ENCODE measurements at regions of chr11 and their contacts with region 1.

Region 1: GRCh38 chr11:128552783-128553661 is 34.3 kb downstream of the ETS1 start:
- DNase-seq: peak; percentile 47
- ATAC-seq: peak; percentile 78
- H3K4me3 Mint-ChIP-seq: peak overlapping the region; percentile 73
- H3K27ac Mint-ChIP-seq: peak overlapping the region; percentile 98
- H3K4me1 Mint-ChIP-seq: peaks cover 72% of the 10 kb centered on the region
- H3K27me3 Mint-ChIP-seq: no peaks in the 10 kb centered on the region
- CTCF ChIP-seq: no peak

Region 2: GRCh38 chr11:128323381-128323780 is 229.6 kb before region 1 on chr11:
- CTCF ChIA-PET with region 1: interaction called, 7 read pairs
- POLR2A ChIA-PET with region 1: interaction called, 4 read pairs
- intact Hi-C with region 1: loop called (anchors 1 kb)
- DNase-seq: no peak
- ATAC-seq: peak; percentile 25
- H3K4me3 Mint-ChIP-seq: no peak overlapping the region
- H3K27ac Mint-ChIP-seq: peak overlapping the region; percentile 59
- H3K4me1 Mint-ChIP-seq: peaks cover 49% of the 10 kb centered on the region
- H3K27me3 Mint-ChIP-seq: no peaks in the 10 kb centered on the region
- CTCF ChIP-seq: no peak

Region 3: GRCh38 chr11:128453444-128454336 is 99.3 kb before region 1 on chr11:
- CTCF ChIA-PET with region 1: no interaction called
- POLR2A ChIA-PET with region 1: no interaction called
- intact Hi-C with region 1: no loop called
- DNase-seq: no peak
- ATAC-seq: no peak
- H3K4me3 Mint-ChIP-seq: no peak overlapping the region
- H3K27ac Mint-ChIP-seq: peak overlapping the region; percentile 54
- H3K4me1 Mint-ChIP-seq: peaks cover 53% of the 10 kb centered on the region
- H3K27me3 Mint-ChIP-seq: no peaks in the 10 kb centered on the region
- CTCF ChIP-seq: no peak

Region 4: DNA sequence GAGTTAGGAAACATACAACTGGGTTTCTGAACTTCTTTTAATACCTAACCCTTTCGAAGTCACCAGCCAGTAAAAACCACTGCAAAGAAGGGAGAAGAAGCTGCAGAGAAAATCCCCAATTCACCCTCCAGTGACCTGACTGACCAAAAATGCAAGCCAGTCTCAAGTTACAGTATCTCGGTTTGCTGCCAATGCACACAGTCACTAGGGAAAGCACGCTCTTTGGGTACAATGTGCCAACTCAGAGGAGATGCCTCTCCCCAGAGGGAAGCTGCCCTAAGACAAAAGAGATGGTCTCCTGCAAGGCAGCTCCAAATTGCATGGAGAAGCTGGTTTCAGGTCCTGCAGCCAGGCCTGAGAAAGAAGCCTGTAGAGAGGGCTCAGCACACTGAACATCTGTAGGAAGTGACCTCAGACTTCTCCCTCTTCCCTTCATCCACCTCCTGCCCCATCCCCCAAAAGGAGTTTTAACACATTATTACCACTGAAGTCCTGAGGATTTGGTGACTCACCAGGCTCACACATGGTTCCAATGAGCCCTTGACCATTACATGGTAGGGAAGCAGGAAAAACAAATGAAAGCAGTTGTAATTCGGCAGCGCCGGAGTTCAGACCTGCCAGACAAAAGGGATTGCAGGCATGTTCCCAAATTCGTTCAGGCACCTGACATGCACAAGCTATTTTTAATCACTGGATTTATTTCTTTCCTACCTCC is 55.8 kb before region 1 on chr11:
- CTCF ChIA-PET with region 1: no interaction called
- POLR2A ChIA-PET with region 1: interaction called, 5 read pairs
- intact Hi-C with region 1: loop called (anchors 1 kb)
- DNase-seq: peak; percentile 43
- ATAC-seq: peak; percentile 92
- H3K4me3 Mint-ChIP-seq: peak overlapping the region; percentile 78
- H3K27ac Mint-ChIP-seq: peak overlapping the region; percentile 93
- H3K4me1 Mint-ChIP-seq: peaks cover 98% of the 10 kb centered on the region
- H3K27me3 Mint-ChIP-seq: no peaks in the 10 kb centered on the region
- CTCF ChIP-seq: no peak

Region 5: GRCh38 chr11:128565881-128566280 is 12.9 kb after region 1 on chr11:
- CTCF ChIA-PET with region 1: interaction called, 10 read pairs
- POLR2A ChIA-PET with region 1: interaction called, 86 read pairs
- intact Hi-C with region 1: loop called (anchors 1 kb)
- DNase-seq: no peak
- ATAC-seq: no peak
- H3K4me3 Mint-ChIP-seq: no peak overlapping the region
- H3K27ac Mint-ChIP-seq: peak overlapping the region; percentile 68
- H3K4me1 Mint-ChIP-seq: peaks cover 76% of the 10 kb centered on the region
- H3K27me3 Mint-ChIP-seq: no peaks in the 10 kb centered on the region
- CTCF ChIP-seq: no peak

Region 6: DNA sequence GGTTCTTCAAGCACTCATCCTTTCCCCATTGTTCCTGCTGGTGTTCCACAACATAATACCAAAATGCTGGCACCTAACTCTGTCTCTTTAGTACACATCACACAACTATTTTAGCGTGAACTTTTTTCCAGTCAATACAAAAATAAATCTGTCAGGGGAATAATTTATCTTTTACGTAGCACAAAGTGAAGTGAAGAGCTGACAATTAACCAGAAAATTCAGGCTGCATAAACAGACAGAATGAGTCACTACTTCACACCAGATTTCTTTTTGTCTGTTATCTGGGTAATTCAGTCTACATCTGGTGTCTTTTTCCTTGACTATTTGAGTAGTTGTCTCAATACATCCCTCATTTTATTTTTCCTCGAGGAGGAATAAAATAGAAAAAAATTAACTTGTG is 42.2 kb after region 1 on chr11:
- CTCF ChIA-PET with region 1: interaction called, 3 read pairs
- POLR2A ChIA-PET with region 1: interaction called, 11 read pairs
- intact Hi-C with region 1: no loop called
- DNase-seq: no peak
- ATAC-seq: no peak
- H3K4me3 Mint-ChIP-seq: no peak overlapping the region
- H3K27ac Mint-ChIP-seq: peak overlapping the region; percentile 75
- H3K4me1 Mint-ChIP-seq: peaks cover 52% of the 10 kb centered on the region
- H3K27me3 Mint-ChIP-seq: no peaks in the 10 kb centered on the region
- CTCF ChIP-seq: no peak

Region 7: DNA sequence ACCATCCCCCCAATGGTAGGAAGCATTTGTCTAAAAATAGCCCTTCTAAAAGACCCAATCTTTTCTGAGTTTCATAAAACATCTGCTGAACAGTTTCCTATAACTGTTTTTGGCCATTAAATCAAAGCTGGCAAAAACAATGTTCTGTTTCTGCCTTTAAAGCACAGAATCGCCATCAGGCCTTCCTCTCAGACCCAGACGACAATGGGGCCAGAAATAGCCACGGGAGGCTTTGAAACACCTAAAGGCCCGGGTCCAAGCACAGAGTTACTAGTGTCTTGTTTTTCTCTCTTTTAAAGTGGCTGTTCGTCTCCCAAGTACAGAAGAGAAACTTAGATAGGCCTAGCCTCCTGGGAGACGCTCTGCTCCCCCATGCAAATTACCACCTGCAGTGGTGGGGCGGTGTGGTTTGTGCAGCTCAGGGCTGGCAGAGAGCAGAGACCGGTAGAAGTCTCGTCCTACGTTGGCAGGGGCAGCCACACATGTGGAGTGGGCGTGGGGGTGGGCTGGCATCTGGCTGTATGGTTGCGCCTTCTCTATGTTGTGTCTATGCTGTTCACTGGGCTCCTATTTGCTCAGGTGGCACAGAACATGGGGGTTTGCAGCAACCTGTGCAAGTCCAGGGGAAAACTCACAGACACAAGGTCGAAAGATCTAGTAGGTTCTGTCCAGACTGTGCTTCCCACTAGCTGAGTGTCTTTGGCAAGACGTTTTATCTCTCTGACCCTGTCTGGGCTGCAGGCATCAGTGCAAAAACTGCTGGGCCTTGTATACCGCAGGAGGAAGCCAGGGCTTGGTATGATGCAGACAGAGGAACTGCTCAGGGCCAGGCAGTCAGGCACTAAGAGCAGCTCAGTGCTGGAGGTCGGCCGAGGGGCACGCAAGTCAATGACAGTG is 57.9 kb after region 1 on chr11:
- CTCF ChIA-PET with region 1: interaction called, 4 read pairs
- POLR2A ChIA-PET with region 1: interaction called, 123 read pairs
- intact Hi-C with region 1: loop called (anchors 1 kb)
- DNase-seq: peak; percentile 79
- ATAC-seq: peak; percentile 87
- H3K4me3 Mint-ChIP-seq: peak overlapping the region; percentile 79
- H3K27ac Mint-ChIP-seq: peak overlapping the region; percentile 94
- H3K4me1 Mint-ChIP-seq: peaks cover 93% of the 10 kb centered on the region
- H3K27me3 Mint-ChIP-seq: no peaks in the 10 kb centered on the region
- CTCF ChIP-seq: no peak

Region 8: DNA sequence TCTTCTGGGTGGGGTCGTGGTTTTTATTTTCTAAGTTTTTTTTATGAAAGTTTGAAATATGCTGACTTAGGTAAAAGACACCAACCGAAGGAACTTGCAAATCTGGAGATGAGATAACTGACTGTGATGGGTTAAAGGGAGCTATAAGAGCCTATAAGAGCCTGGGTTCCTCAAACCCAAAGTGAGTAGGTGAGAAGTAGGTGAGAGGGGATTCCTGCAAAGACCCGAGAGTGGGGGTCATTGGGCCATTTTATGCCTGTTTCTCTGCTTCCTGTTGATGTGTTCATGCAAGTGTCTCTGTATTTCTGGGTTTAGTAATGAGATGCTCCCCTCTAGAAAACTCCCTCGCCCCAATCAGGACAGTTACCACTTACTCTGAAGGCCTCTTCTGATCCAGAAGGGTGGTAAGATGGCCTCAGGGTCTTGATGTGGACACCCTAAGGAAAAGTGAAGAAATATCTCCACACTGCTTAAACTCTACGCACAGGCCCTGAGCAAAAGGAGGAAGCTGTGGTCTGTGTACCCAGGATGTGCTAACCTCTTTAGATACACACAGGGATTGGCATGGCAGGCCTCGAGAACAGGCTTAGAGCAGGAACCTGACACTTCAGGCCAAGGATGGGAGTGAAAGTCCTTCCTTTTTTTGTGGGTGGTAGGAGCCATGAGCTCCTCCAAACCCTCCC is 142.7 kb after region 1 on chr11:
- CTCF ChIA-PET with region 1: no interaction called
- POLR2A ChIA-PET with region 1: no interaction called
- intact Hi-C with region 1: loop called (anchors 2 kb)
- DNase-seq: no peak
- ATAC-seq: peak; percentile 52
- H3K4me3 Mint-ChIP-seq: peak overlapping the region; percentile 96
- H3K27ac Mint-ChIP-seq: peak overlapping the region; percentile 97
- H3K4me1 Mint-ChIP-seq: peaks cover 72% of the 10 kb centered on the region
- H3K27me3 Mint-ChIP-seq: peaks cover 1% of the 10 kb centered on the region
- CTCF ChIP-seq: no peak